Heart right ventricle (tissue), 16 donors: ENCODE measurements at regions of chr13 and their contacts with region 1.

Region 1: GRCh38 chr13:103694033-103694432 is 627.8 kb upstream of the SLC10A2 start:
- DNase-seq: no peak
- ATAC-seq: no peak
- H3K4me3 ChIP-seq: no peak overlapping the region
- H3K27ac ChIP-seq: no peak overlapping the region
- H3K4me1 ChIP-seq: no peaks in the 10 kb centered on the region
- H3K27me3 ChIP-seq: no peaks in the 10 kb centered on the region
- CTCF ChIP-seq: no peak

Region 2: GRCh38 chr13:103730414-103730813 is 36.4 kb after region 1 on chr13:
- intact Hi-C with region 1: loop called in 1 of 10 experiments (anchors 10 kb)
- DNase-seq: peak; percentile 6 to 51
- ATAC-seq: peak in 6 of 8 donors; percentile 29 to 80 (median 53)
- H3K4me3 ChIP-seq: no peak overlapping the region
- H3K27ac ChIP-seq: no peak overlapping the region
- H3K4me1 ChIP-seq: peaks cover 0 to 6% (median 0%) of the 10 kb centered on the region in 9 donors
- H3K27me3 ChIP-seq: no peaks in the 10 kb centered on the region
- CTCF ChIP-seq: no peak

Region 3: DNA sequence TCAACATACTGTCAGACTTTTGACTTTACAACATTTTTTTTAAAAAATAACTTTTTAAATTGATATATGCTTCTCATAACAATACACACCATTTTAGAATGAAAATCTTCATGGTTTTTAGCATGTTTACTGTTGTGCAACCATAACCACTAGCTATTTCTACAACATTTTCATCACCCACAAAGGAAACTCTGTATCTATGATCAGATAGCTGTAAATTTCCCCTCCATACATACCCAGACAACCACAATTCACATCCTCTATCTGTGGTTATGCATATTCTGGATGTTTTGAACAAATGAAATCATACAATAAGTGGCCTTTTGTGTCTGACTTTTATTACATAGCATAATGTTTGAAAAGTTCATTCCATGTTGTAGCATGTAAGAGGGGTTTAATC is 1175.5 kb after region 1 on chr13:
- intact Hi-C with region 1: no loop called
- DNase-seq: no peak
- ATAC-seq: no peak
- H3K4me3 ChIP-seq: no peak overlapping the region
- H3K27ac ChIP-seq: no peak overlapping the region
- H3K4me1 ChIP-seq: no peaks in the 10 kb centered on the region
- H3K27me3 ChIP-seq: no peaks in the 10 kb centered on the region
- CTCF ChIP-seq: no peak